Activated CD4-positive, alpha-beta T cell treated with anti-CD3 and anti-CD28 coated beads, Interleukin-2, amount 10 ng/mL, durations not matched to agents 24 days and 14 days (primary cell): ENCODE measurements at regions of chr1 and their contacts with region 1.

Region 1: DNA sequence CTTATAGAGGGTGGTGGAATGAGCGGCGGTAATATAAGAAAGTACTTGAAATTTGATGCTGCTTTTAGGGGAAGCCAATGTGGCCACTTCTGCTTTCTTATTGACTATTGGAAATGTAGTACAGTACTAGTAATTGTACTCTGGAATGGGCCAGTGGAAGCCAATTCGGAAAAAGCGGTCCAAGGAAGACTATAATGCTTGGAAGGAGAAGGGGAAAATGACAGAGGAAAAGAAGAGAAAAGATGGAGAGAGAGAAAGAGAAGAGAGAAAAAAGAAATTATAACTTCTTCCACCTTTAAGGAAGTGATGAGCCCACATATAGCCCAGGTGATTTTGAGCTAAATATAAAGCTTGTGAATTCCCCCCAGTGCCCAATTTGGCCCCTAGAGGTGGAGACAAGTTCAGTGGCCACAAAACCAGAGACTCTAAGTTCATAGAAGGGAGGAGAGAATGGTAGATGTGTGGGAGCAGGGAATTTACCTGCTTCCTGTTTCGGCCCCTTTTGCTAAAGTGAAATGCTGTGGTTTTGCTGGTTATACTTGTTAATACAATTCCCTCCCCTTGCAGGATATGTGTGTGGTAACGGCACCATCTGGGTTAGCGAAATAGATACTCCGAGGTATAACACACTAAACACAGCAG is 35.7 kb upstream of the DUSP10 start:
- DNase-seq: peak; percentile 87
- H3K4me3 Mint-ChIP-seq: peak overlapping the region; percentile 68
- H3K27ac Mint-ChIP-seq: peak overlapping the region; percentile 90
- H3K4me1 Mint-ChIP-seq: peaks cover 79% of the 10 kb centered on the region
- H3K27me3 Mint-ChIP-seq: no peaks in the 10 kb centered on the region

Region 2: GRCh38 chr1:221708987-221709386 is 68.6 kb before region 1 on chr1:
- intact Hi-C with region 1: loop called (anchors 1 kb)
- DNase-seq: peak; percentile 85
- H3K4me3 Mint-ChIP-seq: peak overlapping the region; percentile 28
- H3K27ac Mint-ChIP-seq: peak overlapping the region; percentile 90
- H3K4me1 Mint-ChIP-seq: peaks cover 63% of the 10 kb centered on the region
- H3K27me3 Mint-ChIP-seq: no peaks in the 10 kb centered on the region

Region 3: DNA sequence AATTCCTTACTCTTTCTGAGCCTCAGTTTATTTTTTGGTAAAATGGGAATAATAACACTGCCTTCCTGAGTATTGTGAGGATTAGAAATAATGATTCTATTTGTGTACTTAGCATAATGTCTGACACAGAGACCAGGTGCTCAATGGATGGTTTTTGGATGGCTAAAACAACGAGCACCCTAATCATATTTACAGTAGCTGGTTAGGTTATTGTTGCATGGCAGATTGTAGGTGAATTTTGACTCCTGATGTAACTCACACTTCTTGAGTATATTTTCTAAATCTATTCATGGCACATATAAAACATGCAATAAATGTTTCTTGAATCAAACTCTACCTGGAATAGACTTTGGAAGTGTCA is 23.7 kb before region 1 on chr1:
- intact Hi-C with region 1: loop called (anchors 1 kb)
- DNase-seq: no peak
- H3K4me3 Mint-ChIP-seq: peak overlapping the region; percentile 38
- H3K27ac Mint-ChIP-seq: peak overlapping the region; percentile 86
- H3K4me1 Mint-ChIP-seq: peaks cover 55% of the 10 kb centered on the region
- H3K27me3 Mint-ChIP-seq: no peaks in the 10 kb centered on the region

Region 4: DNA sequence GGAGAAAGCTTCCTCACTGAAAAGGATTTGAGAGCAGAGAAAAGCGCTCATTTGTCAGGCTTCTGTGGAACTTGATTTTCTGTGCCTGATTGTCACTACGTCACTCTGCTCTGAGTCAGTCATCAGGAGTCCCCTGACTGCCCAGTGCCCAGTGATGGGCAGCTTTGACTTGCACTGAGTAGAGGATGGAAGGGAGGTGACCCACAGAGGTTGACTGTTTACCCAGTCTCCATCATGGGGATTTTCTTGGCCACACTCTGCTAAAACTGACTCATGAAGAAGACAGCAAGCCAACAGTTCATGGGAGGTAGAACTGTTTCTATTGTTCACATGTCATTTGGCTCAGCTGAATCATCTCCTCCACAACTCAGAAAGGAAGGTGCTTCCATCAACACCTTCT is 46.5 kb after region 1 on chr1:
- intact Hi-C with region 1: loop called (anchors 1 kb)
- DNase-seq: peak; percentile 57
- H3K4me3 Mint-ChIP-seq: no peak overlapping the region
- H3K27ac Mint-ChIP-seq: peak overlapping the region; percentile 40
- H3K4me1 Mint-ChIP-seq: peaks cover 52% of the 10 kb centered on the region
- H3K27me3 Mint-ChIP-seq: no peaks in the 10 kb centered on the region

Region 5: DNA sequence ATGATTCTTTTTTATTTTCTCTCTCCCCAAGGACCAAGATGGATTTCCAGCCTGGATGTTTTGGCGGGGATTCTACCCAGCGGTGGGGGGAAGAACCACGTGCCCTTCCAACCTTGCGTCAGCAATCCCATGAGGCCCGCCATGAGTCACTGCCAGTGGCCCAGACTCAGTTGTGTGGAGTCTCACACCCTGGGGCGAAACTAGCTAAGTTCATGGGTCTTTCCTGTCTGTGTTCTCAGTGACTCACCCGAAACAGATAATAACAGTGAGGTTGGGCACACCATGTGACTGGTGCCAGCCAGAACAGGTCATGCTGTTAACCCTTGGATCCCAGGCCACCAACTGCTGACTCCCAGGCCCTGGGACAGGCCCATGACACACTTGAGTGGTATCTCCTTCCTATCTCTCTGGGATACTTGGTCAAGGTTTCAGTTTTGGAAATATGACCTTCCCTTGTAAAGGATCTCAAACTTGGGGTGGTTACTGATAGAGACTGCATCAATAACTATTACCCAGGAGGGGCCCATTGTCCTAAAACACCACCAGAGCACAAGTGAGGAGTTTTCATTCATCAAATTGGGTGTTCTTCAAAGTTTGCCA is 62.3 kb after region 1 on chr1:
- intact Hi-C with region 1: loop called (anchors 2 kb)
- DNase-seq: peak; percentile 79
- H3K4me3 Mint-ChIP-seq: no peak overlapping the region
- H3K27ac Mint-ChIP-seq: peak overlapping the region; percentile 80
- H3K4me1 Mint-ChIP-seq: peaks cover 49% of the 10 kb centered on the region
- H3K27me3 Mint-ChIP-seq: no peaks in the 10 kb centered on the region

Region 6: GRCh38 chr1:221994274-221994698 is 216.7 kb after region 1 on chr1:
- intact Hi-C with region 1: loop called (anchors 1 kb)
- DNase-seq: peak; percentile 65
- H3K4me3 Mint-ChIP-seq: peak overlapping the region; percentile 23
- H3K27ac Mint-ChIP-seq: peak overlapping the region; percentile 92
- H3K4me1 Mint-ChIP-seq: peaks cover 26% of the 10 kb centered on the region
- H3K27me3 Mint-ChIP-seq: no peaks in the 10 kb centered on the region